ENCODE measurements at regions of chr14 and their contacts with region 1.

Region 1: GRCh38 chr14:25132732-25133422 is 82.9 kb upstream of the STXBP6 start:
- DNase-seq: peak; percentile 62
- H3K4me3 ChIP-seq: no peak overlapping the region
- H3K27ac ChIP-seq: no peak overlapping the region
- H3K4me1 ChIP-seq: no peaks in the 10 kb centered on the region
- CTCF ChIP-seq: peak; percentile 86

Region 2: DNA sequence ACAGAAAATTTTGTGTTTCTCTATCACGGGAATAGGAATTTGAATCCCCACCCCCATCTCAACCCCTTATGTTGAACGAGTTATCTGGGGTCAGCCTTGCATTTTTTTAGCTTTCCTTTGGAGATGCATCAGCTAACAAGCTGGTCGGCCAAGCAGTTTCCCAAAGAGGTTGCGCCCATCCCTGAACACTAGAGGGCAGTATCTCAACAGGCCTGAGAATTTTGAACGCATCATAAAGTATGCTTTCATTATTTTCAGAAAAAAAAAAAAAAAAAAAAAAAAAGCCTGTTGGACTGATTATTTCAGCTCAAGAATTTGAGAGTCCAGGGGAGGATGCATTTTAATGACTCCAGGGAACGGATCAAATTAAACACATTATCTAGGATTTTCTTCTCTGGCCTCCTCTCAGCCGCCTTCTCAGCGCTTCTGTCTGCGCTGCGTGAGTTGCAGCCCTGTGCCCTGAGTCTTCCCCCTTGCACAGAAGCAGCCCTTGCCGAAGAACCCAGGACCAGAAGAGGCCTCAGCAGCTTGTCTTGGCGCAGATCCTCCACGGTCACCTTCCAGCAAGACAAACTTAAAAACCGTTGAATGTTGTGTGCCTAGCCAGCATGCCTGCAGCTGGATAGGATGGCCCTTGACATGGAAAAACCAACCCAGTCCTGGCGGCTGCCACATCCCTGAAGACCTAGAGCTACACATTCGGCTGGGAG is 422.3 kb before region 1 on chr14:
- CTCF ChIA-PET with region 1: no interaction called
- POLR2A ChIA-PET with region 1: no interaction called
- intact Hi-C with region 1: loop called (anchors 1 kb)
- DNase-seq: peak; percentile 61
- H3K4me3 ChIP-seq: no peak overlapping the region
- H3K27ac ChIP-seq: no peak overlapping the region
- H3K4me1 ChIP-seq: peaks cover 8% of the 10 kb centered on the region
- CTCF ChIP-seq: peak; percentile 90

Region 3: GRCh38 chr14:25237845-25238244 is 105.0 kb after region 1 on chr14:
- CTCF ChIA-PET with region 1: no interaction called
- POLR2A ChIA-PET with region 1: no interaction called
- intact Hi-C with region 1: no loop called
- DNase-seq: peak; percentile 8
- H3K4me3 ChIP-seq: no peak overlapping the region
- H3K27ac ChIP-seq: no peak overlapping the region
- H3K4me1 ChIP-seq: no peaks in the 10 kb centered on the region
- CTCF ChIP-seq: peak; percentile 57

Region 4: DNA sequence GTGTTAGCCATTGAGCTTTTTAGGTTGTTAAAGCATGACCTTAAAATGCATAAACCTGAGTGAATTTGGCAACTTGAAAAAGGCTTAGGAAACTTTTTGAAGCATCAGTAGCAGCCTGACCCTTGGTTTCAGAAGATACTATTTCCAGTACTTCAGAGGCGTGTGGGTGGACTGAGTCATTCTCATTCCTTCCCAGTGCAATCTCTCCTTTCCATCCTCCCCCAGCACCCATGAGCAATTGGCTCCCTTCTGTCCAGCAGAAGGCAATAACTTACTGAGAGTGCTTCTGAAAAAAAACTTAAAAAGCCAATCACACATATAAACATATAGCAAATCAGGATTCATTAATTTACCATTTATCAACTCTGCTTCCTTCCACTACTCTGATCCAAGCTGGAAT is 216.4 kb after region 1 on chr14:
- CTCF ChIA-PET with region 1: no interaction called
- POLR2A ChIA-PET with region 1: no interaction called
- intact Hi-C with region 1: no loop called
- DNase-seq: no peak
- H3K4me3 ChIP-seq: no peak overlapping the region
- H3K27ac ChIP-seq: no peak overlapping the region
- H3K4me1 ChIP-seq: no peaks in the 10 kb centered on the region
- CTCF ChIP-seq: no peak